Naive thymus-derived CD8-positive, alpha-beta T cell (primary cell): ENCODE measurements at regions of chr15 and their contacts with region 1.

Region 1: DNA sequence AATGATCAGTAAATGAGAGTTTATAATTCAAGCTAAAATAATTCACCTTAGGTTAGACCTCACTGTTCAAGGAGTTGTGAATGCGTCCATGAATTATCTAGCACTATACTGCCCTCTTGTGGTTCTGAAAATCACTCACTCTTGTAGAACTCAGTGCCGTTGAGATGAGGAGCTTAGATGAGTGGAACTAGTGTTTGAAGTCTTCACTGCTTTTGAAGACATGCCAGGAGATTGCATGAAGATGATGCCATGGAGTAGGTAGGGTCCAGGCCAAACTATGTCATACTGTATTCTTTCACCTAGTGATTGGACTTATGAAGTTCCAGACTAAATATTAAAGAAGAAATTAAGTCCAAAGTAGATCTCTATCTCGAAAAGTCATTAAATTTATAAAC is 28.8 kb downstream of the LYSMD4 start:
- DNase-seq: peak in 9 of 10 donors; percentile 17 to 79 (median 65)
- ATAC-seq: peak; percentile 77
- H3K4me3 Mint-ChIP-seq: no peak overlapping the region
- H3K27ac Mint-ChIP-seq: peak overlapping the region in 2 of 10 donors; percentile 26 to 30
- H3K4me1 Mint-ChIP-seq: peaks cover 22 to 57% (median 49%) of the 10 kb centered on the region in 4 donors
- H3K27me3 Mint-ChIP-seq: no peaks in the 10 kb centered on the region

Region 2: GRCh38 chr15:99409097-99409473 is 295.4 kb before region 1 on chr15:
- POLR2A ChIA-PET with region 1: interaction called, 10 read pairs
- DNase-seq: peak in 4 of 10 donors; percentile 16 to 75 (median 38)
- ATAC-seq: peak; percentile 81 to 93
- H3K4me3 Mint-ChIP-seq: peak overlapping the region in 1 of 10 donors; percentile 4
- H3K27ac Mint-ChIP-seq: peak overlapping the region in 6 of 10 donors; percentile 25 to 71 (median 62)
- H3K4me1 Mint-ChIP-seq: peaks cover 13 to 34% (median 25%) of the 10 kb centered on the region in 4 donors
- H3K27me3 Mint-ChIP-seq: no peaks in the 10 kb centered on the region

Region 3: DNA sequence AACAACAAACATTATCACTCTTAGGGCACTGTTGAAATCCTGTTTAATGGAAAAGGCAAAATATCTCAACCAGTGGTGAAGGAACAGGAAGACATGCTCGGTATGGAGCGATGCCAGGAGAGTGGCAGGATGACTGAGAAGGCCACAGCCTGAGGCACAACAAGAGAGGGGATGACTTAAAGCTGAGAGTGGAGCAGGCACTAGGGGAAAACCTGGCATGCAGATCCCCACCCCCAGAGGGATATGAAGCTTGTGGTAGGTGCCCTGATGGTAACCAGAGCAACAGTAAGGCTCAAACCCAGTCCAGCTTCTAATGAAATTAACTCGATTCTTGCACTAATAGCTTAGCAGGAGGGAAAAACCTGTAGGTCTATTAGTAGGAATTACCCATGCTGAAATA is 11.6 kb before region 1 on chr15:
- POLR2A ChIA-PET with region 1: no interaction called
- DNase-seq: no peak
- ATAC-seq: no peak
- H3K4me3 Mint-ChIP-seq: no peak overlapping the region
- H3K27ac Mint-ChIP-seq: peak overlapping the region in 1 of 10 donors; percentile 81
- H3K4me1 Mint-ChIP-seq: peaks cover 0 to 1% (median under 1%) of the 10 kb centered on the region in 4 donors
- H3K27me3 Mint-ChIP-seq: no peaks in the 10 kb centered on the region

Region 4: DNA sequence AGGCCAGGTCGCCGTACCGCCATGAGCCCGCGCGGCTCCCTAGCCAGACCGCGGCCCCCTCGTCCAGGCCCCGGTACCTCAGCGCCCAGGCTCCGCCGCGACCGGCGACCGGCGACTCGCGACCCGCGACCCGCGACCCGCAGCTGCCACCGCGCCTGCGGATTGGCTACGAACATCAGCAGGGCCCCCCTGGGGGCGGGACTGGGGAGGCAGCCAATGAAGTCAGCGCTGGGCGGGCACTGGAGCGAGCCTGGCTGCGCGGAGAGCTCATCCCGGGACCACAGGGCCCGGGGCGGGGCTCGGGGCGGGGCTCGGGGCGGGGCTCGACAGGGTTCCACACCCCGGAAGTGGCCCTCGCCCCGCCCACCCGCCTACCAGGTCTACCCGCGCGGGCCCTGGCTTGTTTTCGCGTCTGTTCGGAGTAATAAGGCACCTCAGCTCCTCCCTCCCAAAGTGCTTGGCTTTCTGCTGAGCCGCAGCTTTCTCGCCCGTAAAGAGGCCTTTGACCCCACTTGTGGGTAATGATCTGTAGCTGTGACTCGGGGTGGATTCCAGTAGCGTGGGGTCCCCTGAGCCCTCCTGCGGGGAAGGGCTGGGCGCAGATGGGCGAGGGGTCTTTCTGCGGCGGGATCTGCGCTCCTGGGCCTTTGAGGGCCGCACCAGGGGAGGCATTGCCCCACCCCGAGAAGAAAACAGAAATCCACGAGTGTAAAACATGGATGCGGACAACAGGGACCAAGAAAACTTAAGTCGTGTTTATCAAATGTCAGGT is 29.0 kb after region 1 on chr15 and contains the start of gene LYSMD4:
- POLR2A ChIA-PET with region 1: interaction called, 16 read pairs
- DNase-seq: peak; percentile 92 to 100 (median 97)
- ATAC-seq: peak; percentile 97 to 98
- H3K4me3 Mint-ChIP-seq: peak within 1 kb of the TSS; percentile 80 to 93 (median 88)
- H3K27ac Mint-ChIP-seq: peak within 1 kb of the TSS; percentile 89 to 97 (median 94)
- H3K4me1 Mint-ChIP-seq: peaks cover 7 to 23% (median 21%) of the 10 kb centered on the region in 4 donors
- H3K27me3 Mint-ChIP-seq: no peaks in the 10 kb centered on the region
- polyA plus RNA-seq, gene LYSMD4: 2.4 to 5.2 (median 3.8) TPM